Activated CD4-positive, alpha-beta T cell treated with anti-CD3 and anti-CD28 coated beads, Interleukin-2, amount 10 ng/mL, durations not matched to agents 24 days and 14 days (primary cell): ENCODE measurements at regions of chr3 and their contacts with region 1.

Region 1: GRCh38 chr3:188869628-188870027 is 302.1 kb upstream of the TPRG1 start:
- DNase-seq: no peak
- H3K4me3 Mint-ChIP-seq: no peak overlapping the region
- H3K27ac Mint-ChIP-seq: no peak overlapping the region
- H3K4me1 Mint-ChIP-seq: no peaks in the 10 kb centered on the region
- H3K27me3 Mint-ChIP-seq: no peaks in the 10 kb centered on the region

Region 2: DNA sequence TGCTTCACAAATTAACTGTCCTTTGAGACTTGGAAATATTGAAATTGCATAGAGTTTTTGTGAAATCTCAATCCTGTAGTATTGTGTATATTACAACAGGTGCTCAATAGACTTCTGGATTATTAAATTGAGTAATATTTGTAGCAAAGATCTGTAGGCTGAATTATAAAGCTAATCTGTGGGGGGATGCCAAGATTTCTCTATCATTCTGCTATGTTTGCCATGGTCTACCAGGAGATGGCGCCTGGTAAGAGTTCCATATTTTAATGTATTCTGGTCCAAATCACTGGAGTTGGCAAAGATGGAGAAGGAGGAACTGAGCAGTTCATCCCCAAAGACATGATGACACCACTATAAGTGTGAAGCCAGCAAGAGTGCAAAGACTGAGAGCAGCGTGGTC is 38.7 kb before region 1 on chr3:
- intact Hi-C with region 1: no loop called
- DNase-seq: no peak
- H3K4me3 Mint-ChIP-seq: no peak overlapping the region
- H3K27ac Mint-ChIP-seq: no peak overlapping the region
- H3K4me1 Mint-ChIP-seq: peaks cover 4% of the 10 kb centered on the region
- H3K27me3 Mint-ChIP-seq: no peaks in the 10 kb centered on the region

Region 3: DNA sequence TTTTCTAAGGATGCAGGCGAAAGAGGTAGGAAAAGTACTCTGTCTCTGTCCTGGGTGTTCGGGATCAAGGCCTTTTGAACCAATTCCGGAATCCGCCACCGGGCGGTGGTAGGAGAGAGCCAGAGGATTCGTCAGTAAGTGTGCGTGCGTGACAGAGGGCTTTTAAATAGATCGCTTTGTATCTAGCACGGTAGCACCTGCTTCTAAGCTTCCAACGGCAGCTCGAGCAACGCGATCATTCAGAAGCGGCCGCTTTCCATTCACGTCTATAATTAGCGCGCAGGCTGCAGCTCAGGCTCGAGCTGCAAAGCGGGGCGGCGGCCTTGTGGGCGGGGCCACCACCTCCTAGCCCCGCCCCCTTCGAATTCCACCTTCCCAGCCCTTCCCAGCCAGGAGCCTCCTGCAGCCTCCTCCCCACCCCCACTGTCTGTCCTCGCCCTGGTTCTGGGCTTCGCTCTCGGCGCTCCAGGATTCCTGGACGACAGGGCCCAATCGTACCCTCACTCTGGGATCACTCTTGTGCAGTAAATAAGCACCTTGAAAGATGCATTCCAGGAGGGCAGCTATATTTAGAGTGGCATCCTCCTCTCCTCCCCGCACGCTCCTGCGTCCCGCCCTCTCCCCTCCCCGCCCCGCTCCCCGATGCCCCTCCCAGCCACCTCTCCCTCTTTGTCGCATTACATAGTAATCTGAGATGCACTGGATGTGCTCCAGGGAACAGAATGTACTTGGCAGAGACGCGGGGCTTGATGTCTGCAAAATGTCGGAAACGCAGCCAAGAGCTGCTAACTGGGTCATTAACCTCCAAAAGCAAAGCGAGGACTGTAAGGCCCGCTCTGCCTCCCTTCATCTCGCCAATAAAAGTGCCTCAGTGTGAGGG is 78.0 kb after region 1 on chr3:
- intact Hi-C with region 1: loop called (anchors 10 kb)
- DNase-seq: peak; percentile 63
- H3K4me3 Mint-ChIP-seq: peak overlapping the region; percentile 36
- H3K27ac Mint-ChIP-seq: no peak overlapping the region
- H3K4me1 Mint-ChIP-seq: peaks cover 28% of the 10 kb centered on the region
- H3K27me3 Mint-ChIP-seq: peaks cover 18% of the 10 kb centered on the region